Heart right ventricle (tissue), 16 donors: ENCODE measurements at regions of chr3 and their contacts with region 1.

Region 1: DNA sequence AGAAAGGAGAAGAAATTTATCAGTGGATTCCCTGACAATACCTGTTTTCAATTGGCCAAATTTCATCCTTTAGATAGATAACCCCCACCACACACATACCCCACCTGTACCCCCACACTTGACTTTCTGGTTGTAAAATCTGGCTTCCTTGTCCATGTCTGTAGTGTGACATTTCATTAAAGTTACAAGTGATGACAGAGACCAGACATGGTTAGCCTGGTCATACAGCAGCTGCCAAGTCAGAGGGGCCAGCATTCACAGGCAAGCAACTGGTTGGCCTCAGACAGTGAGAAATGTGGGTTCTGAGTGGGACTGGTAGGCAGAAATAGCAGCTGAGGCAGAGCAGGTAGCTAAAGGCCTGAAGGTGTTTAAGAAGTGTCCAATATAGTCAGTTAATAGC is 238.6 kb upstream of the SOX14 start:
- DNase-seq: no peak
- ATAC-seq: no peak
- H3K4me3 ChIP-seq: no peak overlapping the region
- H3K27ac ChIP-seq: no peak overlapping the region
- H3K4me1 ChIP-seq: no peaks in the 10 kb centered on the region
- H3K27me3 ChIP-seq: no peaks in the 10 kb centered on the region
- CTCF ChIP-seq: no peak

Region 2: DNA sequence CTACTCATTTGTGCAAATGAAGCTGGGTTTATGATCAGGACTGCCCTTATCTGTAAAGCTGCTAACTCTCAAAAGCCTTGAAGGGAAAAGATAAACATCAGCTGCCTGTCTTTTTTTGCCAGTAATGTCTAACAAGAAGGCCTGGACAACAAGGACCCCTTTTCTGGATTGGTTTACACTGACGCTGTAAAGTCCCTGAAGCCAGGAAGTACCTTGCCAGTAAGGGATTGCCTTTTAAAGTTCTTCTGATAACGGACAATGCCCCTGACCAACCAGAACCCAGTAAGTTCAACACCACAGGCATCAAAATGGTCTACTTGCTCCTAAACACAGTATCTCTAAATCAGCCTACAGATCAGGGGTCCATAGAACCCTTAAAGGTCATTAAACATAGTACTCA is 1097.3 kb before region 1 on chr3:
- intact Hi-C with region 1: no loop called
- DNase-seq: no peak
- ATAC-seq: no peak
- H3K4me3 ChIP-seq: no peak overlapping the region
- H3K27ac ChIP-seq: no peak overlapping the region
- H3K4me1 ChIP-seq: no peaks in the 10 kb centered on the region
- H3K27me3 ChIP-seq: no peaks in the 10 kb centered on the region
- CTCF ChIP-seq: no peak

Region 3: DNA sequence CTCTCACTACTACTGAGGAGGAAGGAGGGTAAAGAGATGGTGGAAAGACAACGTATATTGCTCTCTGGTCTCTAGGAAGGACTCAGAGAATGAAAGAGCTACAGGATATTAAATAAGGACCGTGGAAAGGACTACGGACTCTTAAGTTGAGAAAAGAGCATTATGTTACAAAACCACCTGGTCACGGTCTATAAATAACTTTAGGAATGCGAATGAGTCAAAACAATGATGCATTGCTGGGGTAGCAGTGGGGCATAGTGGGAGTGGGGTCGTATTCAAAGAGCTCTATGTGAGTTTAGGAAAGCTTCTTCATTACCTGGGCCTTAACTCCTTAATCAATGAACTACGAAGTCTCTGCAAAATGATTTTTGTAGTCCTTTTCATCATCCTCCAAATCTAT is 57.0 kb before region 1 on chr3:
- intact Hi-C with region 1: loop called in 1 of 10 experiments (anchors 2 kb)
- DNase-seq: no peak
- ATAC-seq: no peak
- H3K4me3 ChIP-seq: no peak overlapping the region
- H3K27ac ChIP-seq: no peak overlapping the region
- H3K4me1 ChIP-seq: no peaks in the 10 kb centered on the region
- H3K27me3 ChIP-seq: peaks cover 0 to 8% (median 0%) of the 10 kb centered on the region in 7 donors
- CTCF ChIP-seq: no peak